ENCODE measurements at regions of chr1 and their contacts with region 1.

Region 1: DNA sequence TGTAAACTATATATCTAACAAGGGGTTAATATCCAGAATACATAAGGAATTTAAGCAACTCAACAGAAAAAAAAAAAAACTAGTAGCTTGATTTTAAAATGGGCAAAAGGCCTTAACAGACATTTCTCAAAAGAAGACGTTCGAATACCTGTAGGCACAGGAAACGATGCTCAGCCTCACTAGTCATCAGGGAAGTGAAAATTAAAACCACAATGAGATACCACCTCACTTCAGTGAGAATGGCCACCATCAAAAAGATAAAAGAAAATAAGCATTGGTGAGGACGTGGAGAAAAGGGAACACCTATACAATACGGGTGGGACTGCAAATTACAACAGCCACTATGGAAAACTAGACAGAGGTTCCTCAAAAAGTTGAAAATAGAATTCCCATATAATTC is 37.3 kb downstream of the NPHP4 start:
- DNase-seq: peak; percentile 26
- H3K4me3 Mint-ChIP-seq: peak overlapping the region; percentile 27
- H3K27ac Mint-ChIP-seq: peak overlapping the region; percentile 73
- H3K4me1 Mint-ChIP-seq: peaks cover 45% of the 10 kb centered on the region
- H3K27me3 Mint-ChIP-seq: no peaks in the 10 kb centered on the region

Region 2: GRCh38 chr1:5828308-5828935 is 126.5 kb before region 1 on chr1:
- intact Hi-C with region 1: no loop called
- DNase-seq: no peak
- H3K4me3 Mint-ChIP-seq: no peak overlapping the region
- H3K27ac Mint-ChIP-seq: no peak overlapping the region
- H3K4me1 Mint-ChIP-seq: no peaks in the 10 kb centered on the region
- H3K27me3 Mint-ChIP-seq: no peaks in the 10 kb centered on the region

Region 3: GRCh38 chr1:5915587-5916571 is 39.1 kb before region 1 on chr1:
- intact Hi-C with region 1: loop called (anchors 5 kb)
- DNase-seq: no peak
- H3K4me3 Mint-ChIP-seq: no peak overlapping the region
- H3K27ac Mint-ChIP-seq: peak overlapping the region; percentile 47
- H3K4me1 Mint-ChIP-seq: peaks cover 5% of the 10 kb centered on the region
- H3K27me3 Mint-ChIP-seq: no peaks in the 10 kb centered on the region

Region 4: DNA sequence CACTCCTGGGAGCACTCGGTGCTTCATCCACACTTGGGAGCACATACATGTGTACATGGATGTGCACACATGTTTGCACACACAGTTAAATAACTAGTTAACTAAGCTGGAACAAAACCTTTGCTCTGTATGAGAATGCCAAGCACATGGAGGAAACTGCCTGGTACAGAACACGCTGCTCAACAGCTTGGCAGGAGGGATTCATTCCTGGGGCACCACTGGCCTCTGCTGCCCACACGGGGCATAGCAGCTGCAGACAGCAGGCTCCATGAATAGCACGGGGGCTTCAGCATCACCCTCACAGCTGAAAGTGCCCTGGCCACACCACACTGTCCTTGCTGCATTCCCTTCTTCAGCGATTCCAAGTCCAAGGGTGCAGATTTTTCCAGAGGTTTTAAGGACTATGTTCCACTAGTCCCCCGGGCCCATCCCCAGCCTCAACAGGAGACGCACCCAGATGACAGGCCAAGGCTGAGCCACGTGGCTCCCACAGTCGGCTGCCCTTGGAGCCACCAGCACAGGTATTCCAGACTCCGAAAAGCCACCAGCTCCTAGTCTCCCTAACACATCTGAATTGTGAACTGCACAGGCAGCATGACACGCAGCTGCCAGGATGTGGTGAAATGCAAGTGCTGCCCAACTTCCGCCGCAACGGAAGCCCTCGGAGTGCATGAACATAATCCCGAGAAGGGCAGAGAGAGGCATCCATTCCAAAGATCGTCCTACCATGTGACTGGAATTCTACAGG is 20.3 kb after region 1 on chr1:
- intact Hi-C with region 1: loop called (anchors 1 kb)
- DNase-seq: peak; percentile 51
- H3K4me3 Mint-ChIP-seq: peak overlapping the region; percentile 39
- H3K27ac Mint-ChIP-seq: peak overlapping the region; percentile 70
- H3K4me1 Mint-ChIP-seq: peaks cover 7% of the 10 kb centered on the region
- H3K27me3 Mint-ChIP-seq: no peaks in the 10 kb centered on the region

Region 5: DNA sequence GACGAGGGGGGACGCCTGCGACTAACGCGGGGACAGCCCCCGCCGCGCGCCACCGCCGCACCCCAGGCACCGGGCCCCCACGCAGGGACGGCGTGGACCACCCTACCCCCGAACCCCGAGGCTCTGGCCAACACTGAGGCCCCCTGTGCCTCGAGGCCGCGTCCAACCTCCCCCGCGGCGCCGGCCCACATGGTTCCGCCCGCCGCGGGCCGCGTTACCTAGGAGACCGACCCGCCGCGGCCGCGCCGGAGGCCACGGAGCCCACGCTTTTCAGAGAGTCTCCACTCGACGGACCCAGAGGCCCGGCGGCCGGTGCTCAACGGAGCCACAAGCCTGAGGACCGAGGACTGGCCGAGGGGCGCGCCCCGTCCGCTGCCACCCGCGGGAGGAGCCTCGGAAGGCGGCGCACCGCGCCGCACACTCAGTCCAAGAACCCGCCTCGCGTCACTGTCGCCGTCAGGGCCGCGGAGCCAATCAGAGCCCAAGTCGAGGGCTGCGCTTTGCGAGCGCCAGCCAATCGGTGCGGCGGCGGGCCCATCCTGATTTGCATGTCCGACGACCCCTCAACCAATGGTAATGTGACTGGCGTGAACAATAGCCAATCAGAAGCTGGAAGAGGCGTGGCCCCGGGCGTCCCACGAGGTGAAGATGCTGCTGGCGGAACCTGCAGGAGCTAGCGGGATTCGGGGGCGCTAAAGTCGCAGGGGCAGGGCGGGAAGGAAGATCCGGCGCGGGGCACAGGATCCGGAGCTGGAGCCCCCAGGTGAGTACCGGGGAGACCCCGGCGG is 37.3 kb after region 1 on chr1 and contains the start of gene NPHP4:
- intact Hi-C with region 1: loop called (anchors 1 kb)
- DNase-seq: peak; percentile 100
- H3K4me3 Mint-ChIP-seq: peak within 1 kb of the TSS; percentile 96
- H3K27ac Mint-ChIP-seq: peak within 1 kb of the TSS; percentile 96
- H3K4me1 Mint-ChIP-seq: peaks cover 22% of the 10 kb centered on the region
- H3K27me3 Mint-ChIP-seq: no peaks in the 10 kb centered on the region
- total RNA-seq, gene NPHP4: 19.0 and 20.2 TPM in 2 replicates

Region 6: DNA sequence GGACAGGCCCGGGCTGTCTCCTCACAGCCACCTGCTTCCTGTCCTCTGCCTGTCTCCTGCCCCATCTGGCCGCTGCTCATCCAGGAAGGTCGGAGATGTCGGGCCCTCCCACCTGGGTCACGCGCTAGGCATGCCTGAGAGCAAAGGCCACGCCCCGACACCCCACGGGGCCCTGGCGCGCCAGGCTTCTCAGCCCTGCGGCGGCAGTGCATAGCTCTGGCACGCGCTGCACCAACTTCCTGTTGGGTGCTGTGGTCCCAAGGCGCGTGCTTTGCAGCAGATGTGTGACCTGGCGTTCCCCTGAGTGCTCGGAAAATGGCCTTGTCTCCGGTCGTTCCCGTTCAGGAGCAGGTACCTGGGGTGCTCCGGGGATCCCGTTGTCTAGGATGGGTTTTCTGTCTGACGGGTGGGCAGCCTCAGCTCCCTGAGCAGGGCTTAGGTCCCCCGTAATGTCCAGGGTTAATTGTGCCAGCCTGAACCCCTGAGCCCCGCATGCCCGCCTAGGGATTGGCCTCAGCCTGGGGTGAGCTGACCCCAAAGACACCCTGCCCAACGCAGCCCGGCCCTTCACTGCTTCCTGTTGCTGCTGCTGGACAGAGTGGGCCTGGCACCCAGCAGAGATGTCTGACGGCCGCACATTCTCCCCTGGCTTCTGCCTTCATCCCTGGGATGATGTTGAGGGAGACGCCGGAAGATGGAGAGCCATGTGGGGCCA is 71.3 kb after region 1 on chr1:
- intact Hi-C with region 1: loop called (anchors 1 kb)
- DNase-seq: peak; percentile 91
- H3K4me3 Mint-ChIP-seq: peak overlapping the region; percentile 98
- H3K27ac Mint-ChIP-seq: peak overlapping the region; percentile 97
- H3K4me1 Mint-ChIP-seq: peaks cover 44% of the 10 kb centered on the region
- H3K27me3 Mint-ChIP-seq: no peaks in the 10 kb centered on the region